ENCODE measurements at regions of chr19 and their contacts with region 1.

Region 1: DNA sequence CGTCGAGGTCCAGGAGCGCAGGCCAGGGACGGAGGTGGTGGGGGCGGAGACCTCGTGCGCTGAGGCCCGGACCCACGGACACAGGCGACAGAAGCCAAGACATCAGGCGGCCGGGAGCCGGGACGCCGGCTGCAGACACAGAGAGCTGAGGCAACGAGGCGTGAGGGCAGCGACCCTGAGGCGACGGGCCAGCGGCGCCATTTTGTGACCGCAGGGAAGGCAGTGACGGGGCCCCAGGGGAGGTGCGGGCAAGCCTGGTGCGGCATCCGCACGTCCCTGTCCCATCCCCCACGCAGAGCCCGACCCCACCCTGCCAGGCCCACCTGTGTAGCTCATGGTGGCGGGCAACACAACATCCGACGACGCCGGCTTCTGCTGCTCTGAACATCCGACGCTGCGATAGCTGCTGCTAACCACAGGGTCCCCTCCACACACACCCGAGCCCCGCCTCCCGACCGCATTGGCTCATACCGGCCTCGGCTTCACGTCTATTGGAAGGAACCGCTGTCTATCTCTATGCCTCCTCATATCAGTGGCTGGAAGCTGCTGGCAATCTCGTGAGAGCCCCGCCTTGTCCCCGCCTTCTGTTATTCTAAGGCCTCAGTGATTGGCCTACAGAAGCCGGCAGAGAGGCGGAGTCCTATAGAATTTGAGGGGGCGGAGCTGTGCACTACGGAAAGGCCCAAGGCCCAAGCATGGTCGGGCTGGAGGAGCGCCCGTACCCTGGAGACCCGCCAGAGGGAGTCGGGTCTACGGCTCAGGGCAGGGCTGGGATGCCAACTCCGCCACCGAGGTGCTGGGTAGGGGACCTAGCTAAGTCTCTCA is at the start of gene AKAP8L:
- DNase-seq: peak; percentile 96 to 100 (median 98)
- ATAC-seq: peak; percentile 98
- H3K4me3 ChIP-seq: peak within 1 kb of the TSS; percentile 85
- H3K27ac ChIP-seq: peak within 1 kb of the TSS; percentile 79
- H3K4me1 ChIP-seq: peaks cover 12 to 36% of the 10 kb centered on the region in 2 experiments; a peak in 4 of 5 replicates
- H3K27me3 ChIP-seq: no peaks in the 10 kb centered on the region
- CTCF ChIP-seq: peak; percentile 83 to 87 (median 86)
- EP300 ChIP-seq: no peak
- POLR2A ChIP-seq: peak; percentile 95
- RAD21 ChIP-seq: peak; percentile 65 to 72
- polyA plus RNA-seq, gene AKAP8L: 2.4 to 7.0 TPM

Region 2: GRCh38 chr19:15379083-15379995 is 39.5 kb before region 1 on chr19 and contains the start of gene AKAP8:
- CTCF ChIA-PET with region 1: no interaction called
- POLR2A ChIA-PET with region 1: interaction called, 27 read pairs
- in situ Hi-C with region 1: no loop called
- intact Hi-C with region 1: no loop called
- DNase-seq: peak; percentile 97 to 99 (median 98)
- ATAC-seq: peak; percentile 91
- H3K4me3 ChIP-seq: peak within 1 kb of the TSS; percentile 90
- H3K27ac ChIP-seq: peak within 1 kb of the TSS; percentile 89
- H3K4me1 ChIP-seq: peaks cover 16 to 37% of the 10 kb centered on the region in 2 experiments
- H3K27me3 ChIP-seq: no peaks in the 10 kb centered on the region; a peak in 1 of 5 replicates
- CTCF ChIP-seq: no peak
- EP300 ChIP-seq: no peak
- POLR2A ChIP-seq: peak; percentile 93
- RAD21 ChIP-seq: no peak
- polyA plus RNA-seq, gene AKAP8: 3.4 to 4.4 TPM

Region 3: GRCh38 chr19:15404097-15404779 is 14.6 kb before region 1 on chr19:
- CTCF ChIA-PET with region 1: no interaction called
- POLR2A ChIA-PET with region 1: interaction called, 11 read pairs
- in situ Hi-C with region 1: no loop called
- intact Hi-C with region 1: no loop called
- DNase-seq: no peak
- ATAC-seq: no peak
- H3K4me3 ChIP-seq: no peak overlapping the region
- H3K27ac ChIP-seq: no peak overlapping the region
- H3K4me1 ChIP-seq: peaks cover 2 to 7% of the 10 kb centered on the region in 2 experiments; a peak in 4 of 5 replicates
- H3K27me3 ChIP-seq: no peaks in the 10 kb centered on the region
- CTCF ChIP-seq: no peak
- EP300 ChIP-seq: no peak
- POLR2A ChIP-seq: no peak
- RAD21 ChIP-seq: no peak

Region 4: DNA sequence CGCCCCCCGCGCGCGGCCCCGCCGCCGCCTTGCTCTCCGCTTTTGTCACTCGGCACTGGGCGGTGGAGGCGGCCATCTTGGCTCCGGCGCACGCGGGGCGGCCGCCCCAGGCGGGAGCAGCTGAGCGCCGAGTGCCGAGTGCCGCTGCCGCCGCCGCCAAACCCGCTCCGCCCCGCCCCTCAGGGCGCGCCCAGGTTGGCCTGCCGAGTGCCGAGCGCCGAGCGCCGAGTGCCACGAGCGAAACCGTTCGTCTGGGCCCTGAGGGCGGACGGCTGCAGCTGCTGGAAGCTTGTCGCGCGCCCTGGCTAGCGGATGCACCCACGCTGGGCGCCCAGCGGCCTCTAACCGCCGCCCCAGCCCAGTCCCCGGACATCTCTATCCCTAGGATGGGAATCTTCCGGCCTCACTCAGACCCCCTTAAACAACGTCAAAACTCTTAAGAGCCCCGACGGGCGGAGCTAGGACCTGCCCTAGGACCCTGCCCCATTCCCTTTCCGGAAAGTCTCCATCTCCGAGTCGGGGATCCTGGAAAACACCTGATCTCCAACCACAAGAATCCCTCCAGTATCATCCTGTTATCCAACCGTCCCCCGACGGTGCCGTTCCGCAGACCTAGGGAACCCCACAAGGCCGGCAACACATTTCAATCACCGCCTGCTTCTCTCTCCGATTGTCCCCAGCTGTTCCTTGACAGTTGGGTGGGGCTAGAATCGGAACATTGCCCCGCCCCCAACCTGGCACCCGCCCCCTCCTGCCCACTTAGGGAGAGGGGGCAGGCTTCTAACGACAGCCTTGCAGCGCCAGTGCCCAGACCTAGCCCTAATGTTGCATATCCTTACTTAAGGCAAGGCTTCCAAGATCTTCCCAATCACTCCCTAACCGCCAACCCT is 14.1 kb after region 1 on chr19:
- CTCF ChIA-PET with region 1: no interaction called
- POLR2A ChIA-PET with region 1: interaction called, 54 read pairs
- in situ Hi-C with region 1: no loop called
- intact Hi-C with region 1: loop called (anchors 2 kb)
- DNase-seq: peak; percentile 91 to 96 (median 94)
- ATAC-seq: peak; percentile 89
- H3K4me3 ChIP-seq: peak overlapping the region; percentile 75
- H3K27ac ChIP-seq: peak overlapping the region; percentile 73
- H3K4me1 ChIP-seq: peaks cover 14 to 50% of the 10 kb centered on the region in 2 experiments
- H3K27me3 ChIP-seq: peaks cover 0 to 2% of the 10 kb centered on the region in 2 experiments; a peak in 2 of 5 replicates
- CTCF ChIP-seq: no peak
- EP300 ChIP-seq: 0 out of 2 replicates have a peak, but pooled peaks have one; percentile 23
- POLR2A ChIP-seq: peak; percentile 72
- RAD21 ChIP-seq: no peak